ENCODE measurements at regions of chr2 and their contacts with region 1.

Region 1: GRCh38 chr2:158456309-158457066 is at the starts of genes CCDC148 and PKP4:
- DNase-seq: peak; percentile 89
- H3K4me3 ChIP-seq: peak within 1 kb of the TSS; percentile 89 to 95 (median 94)
- H3K27ac ChIP-seq: peak within 1 kb of the TSS; percentile 97 to 98 (median 97)
- H3K4me1 ChIP-seq: peaks cover 5 to 21% (median 13%) of the 10 kb centered on the region in 4 donors
- H3K27me3 ChIP-seq: no peaks in the 10 kb centered on the region
- CTCF ChIP-seq: peak in 4 of 5 experiments; percentile 13 to 63 (median 40)
- EP300 ChIP-seq: no peak
- POLR2A ChIP-seq: no peak
- total RNA-seq, gene CCDC148: 0.48 TPM in 1 of 4 donors, not detected in the others
- total RNA-seq, gene PKP4: 28.1 to 70.3 (median 58.3) TPM

Region 2: GRCh38 chr2:158034199-158034866 is 422.2 kb before region 1 on chr2:
- in situ Hi-C with region 1: loop called in 2 of 4 experiments (anchors 25 kb)
- intact Hi-C with region 1: no loop called
- DNase-seq: peak; percentile 54
- H3K4me3 ChIP-seq: no peak overlapping the region
- H3K27ac ChIP-seq: no peak overlapping the region
- H3K4me1 ChIP-seq: no peaks in the 10 kb centered on the region
- H3K27me3 ChIP-seq: no peaks in the 10 kb centered on the region
- CTCF ChIP-seq: peak; percentile 32 to 62 (median 51)
- EP300 ChIP-seq: no peak
- POLR2A ChIP-seq: no peak

Region 3: GRCh38 chr2:158391876-158392275 is 64.6 kb before region 1 on chr2:
- in situ Hi-C with region 1: no loop called
- intact Hi-C with region 1: no loop called
- DNase-seq: no peak
- H3K4me3 ChIP-seq: no peak overlapping the region
- H3K27ac ChIP-seq: no peak overlapping the region
- H3K4me1 ChIP-seq: no peaks in the 10 kb centered on the region
- H3K27me3 ChIP-seq: no peaks in the 10 kb centered on the region
- CTCF ChIP-seq: no peak
- EP300 ChIP-seq: no peak
- POLR2A ChIP-seq: no peak

Region 4: GRCh38 chr2:158637357-158637756 is 180.9 kb after region 1 on chr2:
- in situ Hi-C with region 1: no loop called
- intact Hi-C with region 1: loop called (anchors 5 kb)
- DNase-seq: no peak
- H3K4me3 ChIP-seq: no peak overlapping the region
- H3K27ac ChIP-seq: no peak overlapping the region
- H3K4me1 ChIP-seq: no peaks in the 10 kb centered on the region
- H3K27me3 ChIP-seq: no peaks in the 10 kb centered on the region
- CTCF ChIP-seq: no peak
- EP300 ChIP-seq: no peak
- POLR2A ChIP-seq: no peak